ENCODE measurements at regions of chr9 and their contacts with region 1.

Region 1: DNA sequence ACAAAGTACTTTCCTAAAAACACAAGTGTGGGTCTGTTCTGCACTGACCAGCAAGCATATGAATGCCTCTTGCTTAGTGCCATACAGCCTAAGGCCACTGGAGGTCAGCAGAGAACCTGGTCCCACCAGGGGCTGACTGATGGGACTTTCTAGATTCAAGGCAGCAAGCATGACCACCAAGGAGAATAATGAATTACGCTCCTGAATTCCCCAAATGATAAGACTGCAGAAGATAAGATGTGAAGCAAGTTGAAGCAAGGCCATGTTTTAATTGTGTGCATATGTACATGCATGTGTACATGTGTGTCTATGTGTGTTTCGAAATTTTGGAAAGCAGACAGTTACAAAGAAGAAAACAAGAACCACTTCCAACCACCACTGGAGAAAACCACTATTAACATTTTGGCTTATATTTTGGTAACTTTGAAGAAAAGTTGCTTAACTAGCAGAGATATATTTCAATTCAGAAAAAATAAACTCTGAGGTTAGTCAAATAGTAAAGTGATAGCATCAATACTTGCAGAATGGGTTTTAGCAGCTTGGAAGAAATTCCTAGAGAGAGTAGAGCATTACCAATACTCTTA is 70.5 kb downstream of the ERP44 start:
- DNase-seq: peak; percentile 59
- ATAC-seq: peak; percentile 99
- H3K4me3 Mint-ChIP-seq: no peak overlapping the region
- H3K27ac Mint-ChIP-seq: no peak overlapping the region
- H3K4me1 Mint-ChIP-seq: peaks cover 32% of the 10 kb centered on the region
- H3K27me3 Mint-ChIP-seq: no peaks in the 10 kb centered on the region
- CTCF ChIP-seq: peak; percentile 39

Region 2: DNA sequence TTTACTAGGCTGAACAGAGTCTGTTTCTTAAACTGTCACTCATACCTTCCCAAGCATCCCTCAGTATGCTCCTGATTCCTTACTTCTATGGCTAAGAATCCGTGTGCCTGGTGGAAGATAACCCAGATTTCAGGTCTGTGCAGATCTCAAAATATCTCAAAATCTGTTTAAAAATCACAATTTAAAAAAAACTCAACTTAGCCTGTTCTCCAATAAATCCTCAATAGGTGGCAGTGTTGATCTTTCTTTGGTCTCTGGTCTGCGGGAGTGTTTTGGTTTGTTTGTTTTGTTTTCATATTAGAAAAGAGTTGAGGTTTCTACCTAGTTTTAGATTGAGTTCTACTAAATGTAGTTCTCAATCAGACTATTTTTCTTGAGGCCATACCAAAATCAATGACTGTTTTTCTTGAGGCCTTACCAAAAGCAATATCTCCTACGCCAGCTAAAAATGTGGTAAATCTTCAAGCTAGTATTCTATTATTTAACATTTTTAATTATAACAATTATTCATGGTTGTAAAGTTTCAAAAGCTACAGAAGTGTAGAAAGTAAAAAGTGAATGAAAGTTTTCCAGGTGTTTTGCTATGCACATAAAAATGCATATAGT is 865.4 kb before region 1 on chr9:
- CTCF ChIA-PET with region 1: interaction called, 3 read pairs
- POLR2A ChIA-PET with region 1: no interaction called
- intact Hi-C with region 1: loop called (anchors 5 kb)
- DNase-seq: no peak
- ATAC-seq: peak; percentile 55
- H3K4me3 Mint-ChIP-seq: no peak overlapping the region
- H3K27ac Mint-ChIP-seq: peak overlapping the region; percentile 66
- H3K4me1 Mint-ChIP-seq: peaks cover 45% of the 10 kb centered on the region
- H3K27me3 Mint-ChIP-seq: no peaks in the 10 kb centered on the region
- CTCF ChIP-seq: peak; percentile 22

Region 3: DNA sequence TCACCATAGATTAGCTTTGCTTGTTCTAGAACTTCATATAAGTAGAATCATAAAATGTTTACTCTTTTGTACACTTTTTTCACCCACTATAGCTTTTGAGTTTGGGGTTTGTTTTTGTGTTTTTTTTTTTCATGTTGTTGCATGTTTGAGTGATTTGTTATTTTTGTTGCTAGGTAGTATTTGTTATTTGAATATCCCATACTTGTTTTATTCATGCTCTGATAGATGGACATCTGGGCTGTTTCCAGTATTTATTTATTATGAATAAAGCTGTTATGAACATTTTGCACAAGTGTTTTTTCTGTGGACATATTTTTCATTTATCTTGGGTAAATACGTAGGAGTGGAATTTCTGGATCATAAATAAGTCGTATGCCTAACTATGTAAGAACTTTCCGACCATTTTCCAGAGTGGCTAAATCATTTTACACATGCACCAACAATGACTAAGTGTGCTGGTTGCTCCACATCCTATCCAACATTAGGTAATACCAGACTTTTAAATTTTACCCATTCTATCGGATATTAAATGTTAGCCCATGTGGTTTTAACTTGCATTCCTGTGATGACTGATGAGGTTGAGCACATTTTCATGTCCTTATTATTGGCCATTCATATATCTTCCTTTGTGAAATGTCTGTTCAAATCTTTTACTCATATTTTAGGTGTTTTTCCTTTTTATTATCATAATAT is 275.7 kb before region 1 on chr9:
- CTCF ChIA-PET with region 1: no interaction called
- POLR2A ChIA-PET with region 1: no interaction called
- intact Hi-C with region 1: no loop called
- DNase-seq: no peak
- ATAC-seq: no peak
- H3K4me3 Mint-ChIP-seq: no peak overlapping the region
- H3K27ac Mint-ChIP-seq: no peak overlapping the region
- H3K4me1 Mint-ChIP-seq: peaks cover 6% of the 10 kb centered on the region
- H3K27me3 Mint-ChIP-seq: peaks cover 3% of the 10 kb centered on the region
- CTCF ChIP-seq: no peak

Region 4: GRCh38 chr9:100084734-100085133 is 56.4 kb after region 1 on chr9:
- CTCF ChIA-PET with region 1: interaction called, 3 read pairs
- POLR2A ChIA-PET with region 1: no interaction called
- intact Hi-C with region 1: loop called (anchors 1 kb)
- DNase-seq: no peak
- ATAC-seq: peak; percentile 65
- H3K4me3 Mint-ChIP-seq: peak overlapping the region; percentile 78
- H3K27ac Mint-ChIP-seq: peak overlapping the region; percentile 94
- H3K4me1 Mint-ChIP-seq: peaks cover 87% of the 10 kb centered on the region
- H3K27me3 Mint-ChIP-seq: no peaks in the 10 kb centered on the region
- CTCF ChIP-seq: no peak

Region 5: DNA sequence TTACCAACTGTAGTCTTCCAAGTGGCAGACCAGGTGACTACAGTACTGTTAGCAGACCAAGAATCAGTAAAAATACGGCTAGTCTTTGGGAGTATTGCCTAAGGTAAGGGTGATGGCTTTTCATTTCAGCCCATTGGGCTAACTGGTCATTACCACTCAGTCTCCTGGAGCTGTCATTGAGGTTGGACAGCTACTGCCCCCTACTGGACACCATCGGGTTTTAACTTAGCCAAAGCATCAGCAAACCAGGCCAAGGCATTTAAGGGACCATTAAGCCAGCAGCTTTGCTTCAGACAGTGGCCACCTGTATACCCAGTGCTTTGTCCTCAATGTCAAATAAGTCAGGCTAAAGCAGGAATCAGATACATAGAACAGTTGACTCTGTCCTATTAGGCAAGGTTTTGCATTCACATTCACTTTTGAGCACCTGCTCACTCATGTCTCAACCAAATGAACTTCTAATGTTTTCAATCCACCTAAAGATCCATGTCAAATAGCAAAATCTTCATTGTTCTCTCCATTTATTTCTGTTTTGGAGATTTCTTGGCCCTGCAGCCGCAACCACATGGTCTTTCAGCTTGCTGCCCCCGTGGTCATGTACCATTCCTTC is 188.0 kb after region 1 on chr9:
- CTCF ChIA-PET with region 1: interaction called, 22 read pairs
- POLR2A ChIA-PET with region 1: no interaction called
- intact Hi-C with region 1: loop called (anchors 1 kb)
- DNase-seq: peak; percentile 37
- ATAC-seq: peak; percentile 87
- H3K4me3 Mint-ChIP-seq: no peak overlapping the region
- H3K27ac Mint-ChIP-seq: no peak overlapping the region
- H3K4me1 Mint-ChIP-seq: no peaks in the 10 kb centered on the region
- H3K27me3 Mint-ChIP-seq: no peaks in the 10 kb centered on the region
- CTCF ChIP-seq: no peak

Region 6: DNA sequence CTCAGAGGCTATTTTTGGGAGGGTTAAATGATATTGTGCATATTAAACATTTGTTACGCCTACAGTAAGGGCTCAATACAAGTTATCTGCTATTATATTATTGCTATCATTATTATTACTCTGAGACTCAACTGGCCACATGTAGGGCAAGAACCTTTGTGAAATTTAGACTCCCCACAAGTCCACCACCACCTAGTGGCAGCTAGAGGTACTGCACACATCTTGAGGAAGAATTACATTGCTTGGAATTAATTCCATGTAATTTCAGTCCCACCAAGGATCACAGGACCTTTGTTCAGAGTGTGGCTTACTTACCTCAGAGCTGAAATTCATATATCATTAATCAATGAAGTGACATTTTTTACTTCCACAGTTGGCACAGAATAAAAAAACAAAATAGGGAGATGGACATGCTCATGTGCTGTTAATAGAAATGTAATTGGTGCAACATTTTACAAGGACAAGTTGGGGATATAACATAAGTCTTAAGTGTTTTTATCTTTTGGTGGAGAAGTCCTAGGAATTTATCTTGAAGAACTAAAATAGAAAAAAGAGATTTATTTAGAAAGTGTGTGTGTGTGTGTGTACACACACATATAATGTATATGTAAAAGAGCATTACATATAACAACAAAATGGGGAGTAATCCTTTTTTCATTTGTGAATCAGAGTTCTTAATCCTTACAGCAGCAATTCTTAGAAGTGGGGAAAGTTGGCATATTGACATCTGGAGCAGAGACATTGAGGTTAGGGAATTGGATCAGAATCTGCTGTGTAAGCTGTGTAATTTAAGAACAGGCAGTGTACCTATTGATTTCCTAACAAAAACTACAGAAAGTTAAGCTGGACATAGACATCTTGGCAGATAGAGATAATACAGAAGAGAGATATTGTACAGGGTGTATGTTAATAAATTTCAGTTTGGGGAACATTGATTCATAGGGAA is 409.8 kb after region 1 on chr9:
- CTCF ChIA-PET with region 1: no interaction called
- POLR2A ChIA-PET with region 1: no interaction called
- intact Hi-C with region 1: loop called (anchors 1 kb)
- DNase-seq: peak; percentile 21
- ATAC-seq: peak; percentile 75
- H3K4me3 Mint-ChIP-seq: no peak overlapping the region
- H3K27ac Mint-ChIP-seq: no peak overlapping the region
- H3K4me1 Mint-ChIP-seq: no peaks in the 10 kb centered on the region
- H3K27me3 Mint-ChIP-seq: no peaks in the 10 kb centered on the region
- CTCF ChIP-seq: peak; percentile 59

Region 7: GRCh38 chr9:101229606-101230005 is 1201.3 kb after region 1 on chr9:
- CTCF ChIA-PET with region 1: no interaction called
- POLR2A ChIA-PET with region 1: no interaction called
- intact Hi-C with region 1: no loop called
- DNase-seq: no peak
- ATAC-seq: no peak
- H3K4me3 Mint-ChIP-seq: no peak overlapping the region
- H3K27ac Mint-ChIP-seq: no peak overlapping the region
- H3K4me1 Mint-ChIP-seq: no peaks in the 10 kb centered on the region
- H3K27me3 Mint-ChIP-seq: peaks cover 4% of the 10 kb centered on the region
- CTCF ChIP-seq: no peak

Region 8: GRCh38 chr9:101311758-101312420 is 1283.6 kb after region 1 on chr9:
- CTCF ChIA-PET with region 1: no interaction called
- POLR2A ChIA-PET with region 1: no interaction called
- intact Hi-C with region 1: loop called (anchors 5 kb)
- DNase-seq: no peak
- ATAC-seq: peak; percentile 45
- H3K4me3 Mint-ChIP-seq: no peak overlapping the region
- H3K27ac Mint-ChIP-seq: no peak overlapping the region
- H3K4me1 Mint-ChIP-seq: no peaks in the 10 kb centered on the region
- H3K27me3 Mint-ChIP-seq: peaks cover 6% of the 10 kb centered on the region
- CTCF ChIP-seq: peak; percentile 56